Caco-2 (cell line): ENCODE measurements at regions of chr3 and their contacts with region 1.

Region 1: DNA sequence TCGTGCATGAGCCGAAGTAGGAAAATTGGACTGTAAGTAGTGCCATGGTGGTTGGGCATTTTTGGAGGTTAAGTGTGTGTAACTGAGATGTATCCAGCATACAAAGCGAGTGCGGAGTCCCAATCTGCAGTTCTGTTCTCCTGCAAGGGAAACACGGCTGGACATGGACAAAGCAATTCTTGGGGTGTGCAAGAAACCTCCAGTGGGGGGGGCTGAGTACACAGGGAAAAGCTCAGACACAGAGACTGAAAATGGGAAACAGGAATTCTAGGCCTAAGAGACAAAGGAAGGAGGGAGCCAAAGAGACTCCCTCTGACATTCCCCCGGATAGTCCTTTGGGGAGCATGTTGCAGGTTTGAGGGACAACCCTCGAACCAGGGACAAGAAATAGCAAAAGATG is 83.2 kb upstream of the PLSCR4 start:
- DNase-seq: peak in 1 of 2 experiments; percentile 30
- H3K4me3 ChIP-seq: no peak overlapping the region
- H3K4me3 Mint-ChIP-seq: no peak overlapping the region
- H3K27ac Mint-ChIP-seq: no peak overlapping the region
- H3K4me1 ChIP-seq: no peaks in the 10 kb centered on the region
- H3K4me1 Mint-ChIP-seq: no peaks in the 10 kb centered on the region
- H3K27me3 ChIP-seq: no peaks in the 10 kb centered on the region
- H3K27me3 Mint-ChIP-seq: no peaks in the 10 kb centered on the region
- CTCF ChIP-seq: peak; percentile 9 to 21

Region 2: GRCh38 chr3:146313411-146314111 is 20.6 kb before region 1 on chr3:
- CTCF ChIA-PET with region 1: no interaction called
- POLR2A ChIA-PET with region 1: no interaction called
- intact Hi-C with region 1: no loop called
- DNase-seq: no peak
- H3K4me3 ChIP-seq: no peak overlapping the region
- H3K4me3 Mint-ChIP-seq: no peak overlapping the region
- H3K27ac Mint-ChIP-seq: no peak overlapping the region
- H3K4me1 ChIP-seq: peaks cover 13% of the 10 kb centered on the region
- H3K4me1 Mint-ChIP-seq: no peaks in the 10 kb centered on the region
- H3K27me3 ChIP-seq: no peaks in the 10 kb centered on the region
- H3K27me3 Mint-ChIP-seq: no peaks in the 10 kb centered on the region
- CTCF ChIP-seq: no peak

Region 3: DNA sequence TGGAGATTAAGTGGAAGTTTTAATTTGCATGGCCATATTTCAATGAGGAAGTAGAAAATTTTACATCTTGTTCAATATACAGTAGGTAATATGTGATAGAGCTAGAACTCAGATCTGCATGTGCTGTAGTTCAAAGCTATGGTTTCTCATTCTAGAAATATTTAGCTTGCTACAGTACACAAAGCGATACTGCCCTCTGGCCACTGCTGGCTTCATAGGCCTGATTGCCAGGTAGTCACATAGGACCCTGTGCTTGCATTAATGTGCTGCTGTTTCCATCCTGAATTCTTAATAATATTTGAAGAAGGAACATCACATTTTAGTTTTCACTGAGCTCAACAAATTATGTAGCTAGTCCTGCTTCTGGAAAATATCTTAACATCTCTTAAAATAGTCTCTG is 48.2 kb after region 1 on chr3:
- CTCF ChIA-PET with region 1: interaction called, 5 read pairs
- POLR2A ChIA-PET with region 1: no interaction called
- intact Hi-C with region 1: loop called (anchors 1 kb)
- DNase-seq: peak; percentile 34 to 45
- H3K4me3 ChIP-seq: no peak overlapping the region
- H3K4me3 Mint-ChIP-seq: no peak overlapping the region
- H3K27ac Mint-ChIP-seq: no peak overlapping the region
- H3K4me1 ChIP-seq: no peaks in the 10 kb centered on the region
- H3K4me1 Mint-ChIP-seq: peaks cover 7% of the 10 kb centered on the region
- H3K27me3 ChIP-seq: no peaks in the 10 kb centered on the region
- H3K27me3 Mint-ChIP-seq: no peaks in the 10 kb centered on the region
- CTCF ChIP-seq: peak; percentile 35 to 66